ENCODE measurements at regions of chr13 and their contacts with region 1.

Region 1: DNA sequence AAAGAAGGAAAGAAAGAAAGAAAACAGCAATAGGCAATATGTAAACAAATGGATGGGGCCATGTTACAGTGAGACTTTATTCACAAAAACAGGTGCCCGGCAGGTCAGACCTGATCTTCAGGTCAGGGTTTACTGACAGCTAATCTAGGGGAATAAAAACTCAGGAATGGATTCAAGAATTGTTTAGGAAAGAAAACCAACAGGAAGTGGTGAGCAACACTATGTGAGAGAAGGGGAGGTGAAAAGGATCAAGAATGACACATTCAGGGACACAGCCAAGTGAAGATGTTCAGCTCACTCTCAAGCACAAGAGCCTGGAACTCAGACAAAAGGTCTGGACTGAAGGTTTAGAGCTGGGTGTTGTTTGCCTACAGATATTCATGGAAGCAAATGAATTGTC is 244.5 kb downstream of the EFNB2 start:
- DNase-seq: no peak
- ATAC-seq: no peak

Region 2: DNA sequence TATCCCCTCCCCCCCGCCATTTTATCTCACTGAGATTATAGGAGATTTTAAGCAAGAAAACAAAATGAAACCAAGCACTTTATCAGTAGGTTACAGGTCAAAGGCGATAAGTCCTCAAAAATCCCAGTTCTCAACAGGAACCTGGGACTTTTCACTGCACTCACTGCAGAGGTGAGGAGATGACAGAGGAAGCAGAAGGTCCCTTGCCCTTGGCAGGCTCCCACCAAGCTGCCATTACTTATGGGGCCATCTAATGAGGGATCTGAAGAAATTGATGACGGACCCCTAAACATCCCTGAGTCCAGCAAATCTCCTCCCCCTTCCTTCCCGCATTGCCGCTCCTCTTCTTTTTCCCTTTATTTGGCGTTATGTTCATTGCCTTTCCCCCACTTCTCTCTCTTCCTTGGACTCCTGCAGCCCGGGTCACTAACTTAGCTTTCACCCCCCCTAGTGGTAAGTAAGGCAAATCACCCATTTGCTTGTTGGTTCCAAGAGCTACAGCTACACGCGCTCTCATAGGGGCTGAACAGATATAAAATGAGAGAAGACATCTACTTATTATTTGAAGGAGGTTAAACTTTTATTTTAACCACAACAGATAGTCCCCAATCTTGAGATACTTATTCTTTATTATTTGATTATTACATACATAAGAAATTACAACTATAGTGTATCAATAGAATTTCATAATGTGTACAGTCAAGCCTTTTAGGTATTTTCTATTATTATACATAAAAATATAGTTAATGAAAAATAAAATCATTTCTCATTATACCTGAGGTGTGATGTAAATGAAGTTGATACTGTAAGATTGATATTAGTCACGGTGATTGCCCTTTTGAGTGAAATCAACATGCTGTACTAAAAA is 328.9 kb after region 1 on chr13:
- intact Hi-C with region 1: loop called (anchors 10 kb)
- DNase-seq: peak; percentile 60
- ATAC-seq: peak; percentile 93

Measured in sciatic nerve (tissue), 2 donors.